Activated B cell treated with CpG ODN at 0.5 μM for 24 hours (primary cell): ENCODE measurements at regions of chr5 and their contacts with region 1.

Region 1: GRCh38 chr5:124706729-124707361 is 39.6 kb downstream of the ZNF608 start:
- DNase-seq: no peak
- ATAC-seq: no peak
- H3K4me3 Mint-ChIP-seq: peak overlapping the region; percentile 67
- H3K27ac Mint-ChIP-seq: peak overlapping the region; percentile 89
- H3K4me1 Mint-ChIP-seq: peaks cover 92% of the 10 kb centered on the region
- H3K27me3 Mint-ChIP-seq: no peaks in the 10 kb centered on the region
- CTCF ChIP-seq: no peak

Region 2: DNA sequence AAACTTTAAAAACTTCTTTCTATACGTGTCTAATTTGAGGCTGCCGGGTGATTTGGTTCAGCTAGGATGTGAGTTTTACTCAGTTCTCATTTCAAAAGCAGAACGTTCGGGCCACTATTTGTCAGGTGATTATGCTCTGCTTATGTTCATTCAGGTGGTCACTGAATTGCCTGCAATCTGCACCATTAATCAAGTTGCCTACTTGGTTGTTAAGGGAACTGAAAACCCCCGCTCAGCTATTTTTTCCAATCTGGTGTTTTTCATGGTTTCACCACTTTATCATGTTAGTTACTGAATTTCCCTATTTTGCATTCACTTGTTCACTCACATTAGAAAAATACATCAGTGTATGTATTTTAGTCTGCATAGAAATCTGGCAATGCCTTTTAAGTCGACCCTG is 671.9 kb before region 1 on chr5:
- CTCF ChIA-PET with region 1: no interaction called
- POLR2A ChIA-PET with region 1: no interaction called
- intact Hi-C with region 1: loop called (anchors 2 kb)
- DNase-seq: no peak
- ATAC-seq: peak; percentile 94
- H3K4me3 Mint-ChIP-seq: peak overlapping the region; percentile 48
- H3K27ac Mint-ChIP-seq: peak overlapping the region; percentile 92
- H3K4me1 Mint-ChIP-seq: peaks cover 52% of the 10 kb centered on the region
- H3K27me3 Mint-ChIP-seq: no peaks in the 10 kb centered on the region
- CTCF ChIP-seq: no peak

Region 3: DNA sequence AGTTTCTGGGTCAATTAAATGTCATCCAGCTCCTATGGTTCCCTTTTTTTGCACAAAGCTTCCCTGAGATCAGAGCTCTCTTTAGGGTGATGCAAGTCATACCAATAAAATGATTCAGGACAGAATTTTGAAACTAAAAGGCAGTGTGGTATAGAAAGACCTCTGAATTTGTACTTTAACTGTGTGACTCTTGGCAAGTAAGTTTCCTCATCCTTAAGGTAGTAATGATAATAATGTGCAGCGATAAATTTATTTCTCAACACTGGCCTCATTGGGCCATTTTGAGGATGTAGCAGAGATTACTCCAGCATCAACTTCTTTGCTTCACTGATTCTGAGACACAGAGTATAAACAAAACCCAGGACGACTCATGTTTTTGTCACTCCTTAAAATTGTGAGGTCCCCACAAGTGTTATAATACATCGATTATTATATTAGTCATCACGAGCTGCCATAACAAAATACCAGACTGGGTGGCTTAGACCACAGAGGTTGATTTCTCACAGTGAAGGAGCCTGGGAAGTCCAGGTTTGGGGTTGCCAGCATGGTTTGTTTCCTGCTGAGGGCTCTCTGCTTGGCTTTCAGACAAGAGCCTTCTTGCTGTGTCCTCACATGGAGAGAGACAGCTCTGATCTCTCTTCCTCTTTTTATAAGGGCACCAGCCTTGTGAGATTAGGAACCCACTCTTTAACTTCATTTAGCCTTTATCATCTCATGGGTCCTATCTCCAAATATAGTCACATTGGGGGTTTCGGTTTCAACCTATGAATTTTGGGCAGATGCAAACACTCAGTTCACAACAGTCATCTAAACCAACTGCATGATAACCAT is 253.4 kb before region 1 on chr5:
- CTCF ChIA-PET with region 1: no interaction called
- POLR2A ChIA-PET with region 1: no interaction called
- intact Hi-C with region 1: loop called (anchors 1 kb)
- DNase-seq: peak; percentile 31
- ATAC-seq: peak; percentile 95
- H3K4me3 Mint-ChIP-seq: peak overlapping the region; percentile 67
- H3K27ac Mint-ChIP-seq: peak overlapping the region; percentile 79
- H3K4me1 Mint-ChIP-seq: peaks cover 43% of the 10 kb centered on the region
- H3K27me3 Mint-ChIP-seq: no peaks in the 10 kb centered on the region
- CTCF ChIP-seq: no peak

Region 4: DNA sequence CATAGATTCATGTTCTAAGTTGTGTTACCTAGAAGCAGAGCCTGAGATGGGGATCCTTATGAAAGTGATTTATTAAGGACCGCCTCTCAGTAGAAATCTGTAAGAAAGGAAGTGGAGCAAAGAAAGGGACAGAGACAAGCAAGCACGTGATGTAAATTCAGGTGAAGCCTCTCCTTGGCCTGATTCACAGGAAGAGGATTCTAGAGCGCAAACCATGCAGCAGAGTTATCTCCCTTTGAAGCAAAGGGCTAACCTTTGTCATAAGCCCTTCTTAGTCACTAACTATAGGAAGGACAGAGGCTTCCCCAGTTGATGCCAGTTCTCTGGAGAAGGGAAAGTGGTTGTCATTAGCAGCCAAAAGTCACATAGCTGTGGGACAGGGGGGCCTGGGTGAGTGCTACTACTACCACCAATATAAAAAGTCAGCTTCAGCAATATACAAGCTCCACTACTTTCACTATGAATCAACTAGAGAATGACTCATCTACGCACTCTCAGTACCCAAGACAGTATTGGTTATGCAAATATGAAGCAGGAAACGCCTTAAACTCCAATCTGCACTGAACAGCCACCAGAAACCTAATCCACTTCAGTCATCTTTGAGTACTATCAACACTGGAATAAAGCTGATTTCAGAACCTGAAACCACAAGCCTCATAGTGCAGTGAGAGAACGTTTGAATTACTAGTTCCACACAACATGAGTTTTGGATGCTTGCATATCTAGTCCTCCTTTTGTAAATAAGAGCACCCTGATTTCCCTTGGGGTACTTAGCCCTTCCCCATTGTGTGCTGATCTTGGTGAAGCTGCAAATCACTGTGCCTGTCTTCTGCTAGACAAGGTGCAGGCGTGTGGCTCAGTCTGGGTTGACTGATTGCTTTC is 123.1 kb before region 1 on chr5:
- CTCF ChIA-PET with region 1: no interaction called
- POLR2A ChIA-PET with region 1: interaction called, 5 read pairs
- intact Hi-C with region 1: loop called (anchors 1 kb)
- DNase-seq: peak; percentile 23
- ATAC-seq: peak; percentile 89
- H3K4me3 Mint-ChIP-seq: peak overlapping the region; percentile 61
- H3K27ac Mint-ChIP-seq: peak overlapping the region; percentile 94
- H3K4me1 Mint-ChIP-seq: peaks cover 36% of the 10 kb centered on the region
- H3K27me3 Mint-ChIP-seq: no peaks in the 10 kb centered on the region
- CTCF ChIP-seq: no peak

Region 5: DNA sequence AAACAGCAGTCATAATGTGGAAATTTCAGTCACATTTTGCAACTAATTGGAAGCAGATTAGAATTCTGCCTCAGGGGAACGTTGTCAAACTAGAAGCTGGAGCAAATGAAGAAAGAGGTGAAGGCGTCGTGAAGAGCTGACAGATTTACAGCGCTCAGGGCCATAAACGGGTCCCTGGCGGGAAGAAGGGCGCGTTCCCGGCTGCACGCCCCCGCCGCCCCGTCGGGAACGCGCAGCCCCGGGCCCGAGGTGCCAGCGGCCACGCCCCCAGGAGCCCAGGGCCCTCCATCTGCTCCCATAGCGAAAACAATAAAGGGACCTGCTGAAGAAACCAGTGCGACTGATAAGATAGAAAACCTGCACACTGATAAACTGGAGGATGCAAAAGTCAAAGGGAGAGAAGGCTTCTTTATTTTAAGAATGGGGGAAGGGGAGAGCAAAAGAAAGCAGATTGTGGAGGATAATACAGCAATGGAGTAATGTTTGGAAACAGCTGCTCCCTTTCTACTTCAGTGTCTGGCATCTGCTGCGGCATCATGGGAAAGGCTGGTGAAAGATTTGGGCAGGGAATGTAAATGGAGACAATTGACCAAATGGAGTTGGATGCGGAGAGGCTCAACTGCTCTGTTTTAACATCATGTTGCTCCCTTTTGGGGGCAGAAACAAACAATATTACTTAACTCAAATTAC is 28.5 kb after region 1 on chr5:
- CTCF ChIA-PET with region 1: no interaction called
- POLR2A ChIA-PET with region 1: interaction called, 16 read pairs
- intact Hi-C with region 1: no loop called
- DNase-seq: no peak
- ATAC-seq: peak; percentile 45
- H3K4me3 Mint-ChIP-seq: peak overlapping the region; percentile 73
- H3K27ac Mint-ChIP-seq: peak overlapping the region; percentile 54
- H3K4me1 Mint-ChIP-seq: peaks cover 82% of the 10 kb centered on the region
- H3K27me3 Mint-ChIP-seq: no peaks in the 10 kb centered on the region
- CTCF ChIP-seq: no peak

Region 6: GRCh38 chr5:124902097-124902821 is 195.4 kb after region 1 on chr5:
- CTCF ChIA-PET with region 1: no interaction called
- POLR2A ChIA-PET with region 1: no interaction called
- intact Hi-C with region 1: loop called (anchors 5 kb)
- DNase-seq: peak; percentile 37
- ATAC-seq: peak; percentile 98
- H3K4me3 Mint-ChIP-seq: peak overlapping the region; percentile 72
- H3K27ac Mint-ChIP-seq: peak overlapping the region; percentile 88
- H3K4me1 Mint-ChIP-seq: peaks cover 40% of the 10 kb centered on the region
- H3K27me3 Mint-ChIP-seq: no peaks in the 10 kb centered on the region
- CTCF ChIP-seq: no peak

Region 7: DNA sequence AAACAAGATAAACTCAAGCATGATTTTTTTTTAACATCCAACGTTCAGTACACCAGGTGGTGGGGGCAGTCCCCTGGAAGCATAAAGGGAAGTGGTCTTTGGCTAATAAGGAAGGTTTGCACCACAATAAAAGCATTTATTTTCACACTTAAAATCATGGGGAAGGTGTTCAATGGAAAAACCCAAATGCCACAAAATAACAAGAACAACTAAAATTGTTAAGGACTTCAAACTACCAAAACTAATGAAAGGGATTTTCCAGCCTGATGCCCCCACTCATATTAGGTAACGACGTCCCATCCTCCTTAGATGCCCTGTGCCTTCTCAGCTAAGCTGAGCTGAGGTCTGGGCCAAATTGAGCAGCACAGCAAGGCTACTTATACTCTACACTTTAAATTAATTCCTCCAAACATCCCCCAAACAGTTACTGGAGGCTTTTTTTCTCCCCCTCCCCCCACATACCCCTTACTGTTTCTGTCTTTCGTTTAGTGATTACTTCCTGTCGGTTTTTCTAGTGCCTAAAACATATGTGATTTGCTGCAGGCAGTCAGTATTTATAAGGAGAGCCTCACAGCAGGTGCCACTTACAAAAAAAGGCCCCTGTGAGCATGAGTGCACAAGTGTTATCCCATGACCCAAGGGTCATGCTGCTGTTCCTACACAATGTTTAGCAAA is 299.3 kb after region 1 on chr5:
- CTCF ChIA-PET with region 1: no interaction called
- POLR2A ChIA-PET with region 1: no interaction called
- intact Hi-C with region 1: loop called (anchors 1 kb)
- DNase-seq: no peak
- ATAC-seq: peak; percentile 67
- H3K4me3 Mint-ChIP-seq: peak overlapping the region; percentile 66
- H3K27ac Mint-ChIP-seq: peak overlapping the region; percentile 90
- H3K4me1 Mint-ChIP-seq: peaks cover 71% of the 10 kb centered on the region
- H3K27me3 Mint-ChIP-seq: no peaks in the 10 kb centered on the region
- CTCF ChIP-seq: no peak